Endothelial cell of umbilical vein (primary cell): ENCODE measurements at regions of chr11 and their contacts with region 1.

Region 1: DNA sequence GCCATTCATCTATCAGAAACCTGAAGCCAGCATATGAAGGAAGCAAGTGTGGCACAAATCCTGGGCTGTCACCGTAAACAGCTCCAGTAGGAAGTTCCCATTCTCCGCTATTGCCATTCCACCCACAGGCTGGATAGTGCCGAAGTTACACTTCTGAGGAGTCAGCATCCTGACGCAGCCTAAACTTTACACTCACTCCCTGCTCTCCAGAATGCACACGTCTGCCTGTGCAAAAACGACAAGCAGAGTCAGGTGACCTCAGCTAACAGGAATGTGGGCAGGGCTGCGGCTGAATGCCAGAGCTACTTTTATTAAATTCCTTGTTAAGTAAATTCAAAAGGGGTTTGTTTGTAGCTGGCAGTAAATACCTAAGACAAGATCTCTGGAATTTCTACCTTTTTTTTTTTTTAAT is 33.7 kb downstream of the NFRKB start:
- DNase-seq: peak; percentile 89
- H3K4me3 ChIP-seq: no peak overlapping the region
- H3K27ac ChIP-seq: peak overlapping the region; percentile 78
- H3K4me1 ChIP-seq: peaks cover 9% of the 10 kb centered on the region
- H3K27me3 ChIP-seq: no peaks in the 10 kb centered on the region
- CTCF ChIP-seq: no peak
- POLR2A ChIP-seq: no peak

Region 2: DNA sequence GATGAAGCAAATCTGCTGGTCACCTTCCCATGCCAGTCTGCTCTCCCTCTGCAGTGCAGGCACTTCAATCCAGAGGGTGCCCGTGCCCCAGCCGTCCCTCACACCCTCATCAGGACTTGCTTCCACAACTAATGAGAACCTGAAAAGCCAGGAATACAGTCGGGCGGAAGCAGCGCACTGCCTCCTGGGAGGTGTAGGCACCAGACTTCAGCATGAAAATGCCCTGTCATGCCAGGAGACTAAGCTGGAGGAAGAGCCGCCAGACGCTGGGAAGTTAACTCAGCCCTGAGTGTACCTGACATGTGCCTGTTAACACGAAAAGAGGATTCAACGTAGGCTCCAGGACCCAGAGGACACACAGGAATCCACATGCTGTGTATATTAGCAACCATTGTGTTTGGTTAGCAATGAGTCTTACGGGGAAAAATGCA is 1207.9 kb before region 1 on chr11:
- CTCF ChIA-PET with region 1: no interaction called
- POLR2A ChIA-PET with region 1: no interaction called
- dilution Hi-C with region 1: no loop called
- intact Hi-C with region 1: no loop called
- DNase-seq: peak; percentile 47
- H3K4me3 ChIP-seq: no peak overlapping the region
- H3K27ac ChIP-seq: no peak overlapping the region
- H3K4me1 ChIP-seq: no peaks in the 10 kb centered on the region
- H3K27me3 ChIP-seq: no peaks in the 10 kb centered on the region
- CTCF ChIP-seq: no peak
- POLR2A ChIP-seq: no peak

Region 3: DNA sequence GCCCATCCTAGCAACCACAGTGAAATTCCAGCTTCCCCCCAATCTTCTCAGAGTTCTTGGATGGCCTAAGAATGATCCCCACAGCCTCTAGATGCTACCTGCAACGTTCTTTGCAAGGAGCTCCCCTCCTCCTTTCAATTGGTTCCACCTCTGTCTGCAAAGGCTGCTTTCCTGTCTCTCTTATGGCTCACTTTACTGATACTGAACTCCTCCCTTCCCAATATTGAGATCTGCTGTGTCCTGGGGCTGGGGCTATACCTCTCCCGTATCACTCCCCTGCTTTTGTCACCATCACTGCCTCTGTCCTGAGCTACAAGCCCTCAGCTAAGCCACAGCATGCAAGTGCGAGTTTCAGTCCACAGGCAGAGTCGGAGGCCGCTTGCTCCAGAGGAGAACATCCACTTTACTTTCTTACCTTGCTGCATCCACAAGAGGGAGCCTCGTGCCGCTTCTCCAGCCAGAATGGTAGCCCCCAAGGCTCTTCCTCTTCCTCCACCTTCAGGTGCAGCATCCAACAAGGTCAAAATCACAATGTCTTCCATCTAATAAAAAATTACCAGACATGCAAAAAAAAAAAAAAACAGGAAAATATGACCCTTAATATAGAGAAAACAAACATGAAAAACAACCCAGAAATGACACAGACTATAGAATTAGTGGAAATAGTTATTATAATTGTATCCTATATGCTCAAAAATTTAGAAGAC is 94.7 kb before region 1 on chr11:
- CTCF ChIA-PET with region 1: interaction called, 9 read pairs
- POLR2A ChIA-PET with region 1: no interaction called
- dilution Hi-C with region 1: no loop called
- intact Hi-C with region 1: loop called (anchors 2 kb)
- DNase-seq: peak; percentile 26
- H3K4me3 ChIP-seq: no peak overlapping the region
- H3K27ac ChIP-seq: no peak overlapping the region
- H3K4me1 ChIP-seq: no peaks in the 10 kb centered on the region
- H3K27me3 ChIP-seq: no peaks in the 10 kb centered on the region
- CTCF ChIP-seq: peak; percentile 31 to 63
- POLR2A ChIP-seq: no peak

Region 4: GRCh38 chr11:129785383-129786111 is 76.2 kb before region 1 on chr11:
- CTCF ChIA-PET with region 1: no interaction called
- POLR2A ChIA-PET with region 1: no interaction called
- dilution Hi-C with region 1: no loop called
- intact Hi-C with region 1: loop called (anchors 2 kb)
- DNase-seq: no peak
- H3K4me3 ChIP-seq: no peak overlapping the region
- H3K27ac ChIP-seq: no peak overlapping the region
- H3K4me1 ChIP-seq: no peaks in the 10 kb centered on the region
- H3K27me3 ChIP-seq: peaks cover 2 to 3% of the 10 kb centered on the region in 2 experiments
- CTCF ChIP-seq: no peak
- POLR2A ChIP-seq: no peak

Region 5: GRCh38 chr11:129895126-129896041 is 33.7 kb after region 1 on chr11 and contains the start of gene NFRKB:
- CTCF ChIA-PET with region 1: no interaction called
- POLR2A ChIA-PET with region 1: no interaction called
- dilution Hi-C with region 1: no loop called
- intact Hi-C with region 1: no loop called
- DNase-seq: peak; percentile 84
- H3K4me3 ChIP-seq: peak within 1 kb of the TSS; percentile 72 to 95 (median 93)
- H3K27ac ChIP-seq: no peak within 1 kb of the TSS
- H3K4me1 ChIP-seq: peaks cover 9% of the 10 kb centered on the region
- H3K27me3 ChIP-seq: no peaks in the 10 kb centered on the region
- CTCF ChIP-seq: no peak
- POLR2A ChIP-seq: peak; percentile 83
- total RNA-seq, gene NFRKB: 30.1 and 30.6 TPM in 2 replicates